ENCODE measurements at regions of chr17 and their contacts with region 1.

Region 1: DNA sequence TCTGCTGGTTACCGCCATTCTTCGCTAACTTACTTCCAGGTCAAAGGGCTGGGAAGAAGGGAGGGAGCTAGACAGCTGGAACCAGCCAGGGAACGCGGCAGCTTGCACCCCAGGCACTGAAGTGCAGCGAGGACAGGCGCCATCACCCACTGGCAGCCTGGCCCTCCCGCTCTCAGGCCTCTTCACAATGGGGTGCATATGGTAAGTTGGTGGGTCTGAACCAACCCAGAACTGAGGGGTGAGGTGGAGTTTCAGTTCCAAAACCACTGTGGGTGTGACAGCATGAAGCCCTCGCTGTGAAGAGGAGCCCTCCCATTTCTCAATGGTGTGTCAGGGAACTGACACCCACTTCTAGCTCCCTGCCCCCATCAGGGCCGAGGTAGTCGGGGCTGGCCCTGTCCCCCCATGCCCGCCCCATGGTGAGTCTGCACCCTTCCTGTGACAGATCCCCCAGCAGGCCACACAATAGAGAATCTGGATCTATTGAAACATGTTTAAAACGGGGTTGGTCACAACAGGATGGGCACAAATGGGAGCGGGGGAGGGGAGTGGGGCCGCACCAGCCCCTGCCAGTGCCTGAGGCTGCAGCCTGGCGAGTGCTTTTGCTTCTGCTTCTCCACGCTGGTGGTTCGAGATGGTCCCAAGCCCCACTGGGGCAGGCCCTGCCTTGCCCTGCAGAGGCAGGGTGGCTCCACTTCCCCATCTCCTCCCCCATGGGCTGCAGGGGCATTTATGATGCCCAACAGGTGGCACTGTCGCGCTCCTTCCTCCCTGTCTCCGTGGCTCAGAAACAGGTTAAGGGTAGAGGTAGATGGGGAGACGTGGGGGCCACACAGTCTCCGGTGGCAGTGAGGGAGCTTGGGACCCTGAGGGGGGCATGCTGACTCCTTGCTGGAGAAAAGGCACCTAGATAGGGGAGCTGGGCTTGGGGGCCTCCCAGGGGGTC is 2.3 kb downstream of the LIMD2 start:
- DNase-seq: peak; percentile 74 to 91 (median 86)
- ATAC-seq: peak; percentile 57
- H3K4me3 ChIP-seq: peak overlapping the region; percentile 81
- H3K4me3 Mint-ChIP-seq: peak overlapping the region; percentile 83 to 100 (median 98)
- H3K27ac ChIP-seq: peak overlapping the region; percentile 93
- H3K27ac Mint-ChIP-seq: peak overlapping the region; percentile 89 to 100 (median 99)
- H3K4me1 ChIP-seq: peaks cover 43 to 46% of the 10 kb centered on the region in 2 donors
- H3K4me1 Mint-ChIP-seq: peaks cover 45 to 61% (median 56%) of the 10 kb centered on the region in 7 donors
- H3K27me3 ChIP-seq: no peaks in the 10 kb centered on the region
- H3K27me3 Mint-ChIP-seq: no peaks in the 10 kb centered on the region

Region 2: GRCh38 chr17:63549946-63550807 is 147.4 kb before region 1 on chr17 and contains the start of gene DCAF7:
- CTCF ChIA-PET with region 1: no interaction called
- POLR2A ChIA-PET with region 1: interaction called, 5 read pairs
- intact Hi-C with region 1: loop called (anchors 2 to 5 kb)
- DNase-seq: peak; percentile 93 to 99 (median 99)
- ATAC-seq: peak; percentile 97
- H3K4me3 ChIP-seq: peak within 1 kb of the TSS; percentile 93
- H3K4me3 Mint-ChIP-seq: peak within 1 kb of the TSS; percentile 85 to 99 (median 98)
- H3K27ac ChIP-seq: peak within 1 kb of the TSS; percentile 90
- H3K27ac Mint-ChIP-seq: peak within 1 kb of the TSS; percentile 94 to 97 (median 96)
- H3K4me1 ChIP-seq: peaks cover 18 to 27% of the 10 kb centered on the region in 2 donors
- H3K4me1 Mint-ChIP-seq: peaks cover 32 to 50% (median 41%) of the 10 kb centered on the region in 7 donors
- H3K27me3 ChIP-seq: no peaks in the 10 kb centered on the region
- H3K27me3 Mint-ChIP-seq: peaks cover 0 to 2% (median 0%) of the 10 kb centered on the region in 5 donors
- total RNA-seq, gene DCAF7: 26.0 to 128 (median 70.0) TPM

Region 3: DNA sequence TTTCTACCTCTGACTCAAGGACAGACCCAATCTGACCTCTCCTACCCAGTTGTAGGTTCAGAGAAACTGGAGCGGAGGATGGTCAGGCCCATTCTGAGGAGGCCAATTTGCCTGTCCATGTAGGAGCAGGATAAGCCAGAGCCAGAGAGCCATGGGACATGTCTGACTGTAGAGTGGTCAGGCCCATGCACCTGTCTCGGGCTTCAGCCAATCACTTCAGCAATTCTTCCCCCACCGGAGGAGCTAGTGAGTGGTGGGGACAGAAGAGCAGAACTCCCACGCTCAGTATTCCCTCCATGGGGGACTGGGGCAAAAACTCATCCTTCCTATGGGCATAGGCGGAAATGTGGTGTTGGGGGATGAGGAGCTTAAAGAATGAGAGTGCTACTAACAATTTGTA is 133.1 kb before region 1 on chr17:
- CTCF ChIA-PET with region 1: no interaction called
- POLR2A ChIA-PET with region 1: no interaction called
- intact Hi-C with region 1: no loop called
- DNase-seq: no peak
- ATAC-seq: no peak
- H3K4me3 ChIP-seq: no peak overlapping the region
- H3K4me3 Mint-ChIP-seq: no peak overlapping the region
- H3K27ac ChIP-seq: no peak overlapping the region
- H3K27ac Mint-ChIP-seq: peak overlapping the region in 2 of 9 donors; percentile 38 to 69
- H3K4me1 ChIP-seq: peaks cover 0 to 4% of the 10 kb centered on the region in 2 donors
- H3K4me1 Mint-ChIP-seq: peaks cover 37 to 83% (median 72%) of the 10 kb centered on the region in 7 donors
- H3K27me3 ChIP-seq: no peaks in the 10 kb centered on the region
- H3K27me3 Mint-ChIP-seq: no peaks in the 10 kb centered on the region

Region 4: DNA sequence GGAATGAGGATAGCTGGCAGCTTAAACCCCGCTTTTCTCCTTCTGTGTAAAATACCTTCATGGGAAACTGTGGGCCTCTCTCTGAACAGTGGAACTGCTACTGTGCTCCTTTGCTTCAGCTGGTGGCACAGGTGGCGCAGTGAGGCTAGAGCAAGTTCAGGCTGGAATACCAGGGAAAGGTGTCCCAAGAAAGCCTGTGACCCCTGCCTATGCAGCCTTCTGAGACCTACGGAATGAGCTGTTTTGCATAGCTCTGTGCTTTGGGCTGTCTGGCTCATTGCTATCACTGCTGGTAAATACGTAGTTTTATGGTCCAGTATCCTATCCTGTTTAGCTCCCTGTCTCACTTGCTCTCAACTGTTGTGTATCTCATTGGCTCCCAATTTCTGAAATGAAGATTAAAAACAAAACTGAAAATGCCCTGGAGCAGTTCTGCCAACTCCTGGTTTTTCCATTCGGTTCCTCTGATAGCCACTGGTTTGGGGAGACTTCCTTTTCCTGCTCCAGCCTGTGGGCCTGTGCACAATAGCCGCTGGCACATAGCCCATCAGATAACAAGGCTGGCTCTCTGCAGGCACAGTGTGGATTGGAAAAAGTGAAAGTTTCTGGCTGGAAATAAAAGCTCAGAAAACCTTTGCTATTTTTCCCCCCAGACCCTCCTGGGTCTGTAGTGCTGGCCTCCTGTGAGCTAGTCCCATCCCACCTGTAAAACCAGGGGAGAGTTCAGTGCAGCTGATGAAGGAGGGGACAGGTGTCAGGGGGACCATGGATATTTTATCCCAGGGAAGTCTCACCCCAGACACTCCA is 21.8 kb before region 1 on chr17:
- CTCF ChIA-PET with region 1: no interaction called
- POLR2A ChIA-PET with region 1: interaction called, 60 read pairs
- intact Hi-C with region 1: no loop called
- DNase-seq: no peak
- ATAC-seq: no peak
- H3K4me3 ChIP-seq: no peak overlapping the region
- H3K4me3 Mint-ChIP-seq: no peak overlapping the region
- H3K27ac ChIP-seq: peak overlapping the region; percentile 1
- H3K27ac Mint-ChIP-seq: peak overlapping the region in 7 of 9 donors; percentile 26 to 87 (median 56)
- H3K4me1 ChIP-seq: no peaks in the 10 kb centered on the region
- H3K4me1 Mint-ChIP-seq: peaks cover 3 to 42% (median 30%) of the 10 kb centered on the region in 7 donors
- H3K27me3 ChIP-seq: no peaks in the 10 kb centered on the region
- H3K27me3 Mint-ChIP-seq: no peaks in the 10 kb centered on the region

Region 5: DNA sequence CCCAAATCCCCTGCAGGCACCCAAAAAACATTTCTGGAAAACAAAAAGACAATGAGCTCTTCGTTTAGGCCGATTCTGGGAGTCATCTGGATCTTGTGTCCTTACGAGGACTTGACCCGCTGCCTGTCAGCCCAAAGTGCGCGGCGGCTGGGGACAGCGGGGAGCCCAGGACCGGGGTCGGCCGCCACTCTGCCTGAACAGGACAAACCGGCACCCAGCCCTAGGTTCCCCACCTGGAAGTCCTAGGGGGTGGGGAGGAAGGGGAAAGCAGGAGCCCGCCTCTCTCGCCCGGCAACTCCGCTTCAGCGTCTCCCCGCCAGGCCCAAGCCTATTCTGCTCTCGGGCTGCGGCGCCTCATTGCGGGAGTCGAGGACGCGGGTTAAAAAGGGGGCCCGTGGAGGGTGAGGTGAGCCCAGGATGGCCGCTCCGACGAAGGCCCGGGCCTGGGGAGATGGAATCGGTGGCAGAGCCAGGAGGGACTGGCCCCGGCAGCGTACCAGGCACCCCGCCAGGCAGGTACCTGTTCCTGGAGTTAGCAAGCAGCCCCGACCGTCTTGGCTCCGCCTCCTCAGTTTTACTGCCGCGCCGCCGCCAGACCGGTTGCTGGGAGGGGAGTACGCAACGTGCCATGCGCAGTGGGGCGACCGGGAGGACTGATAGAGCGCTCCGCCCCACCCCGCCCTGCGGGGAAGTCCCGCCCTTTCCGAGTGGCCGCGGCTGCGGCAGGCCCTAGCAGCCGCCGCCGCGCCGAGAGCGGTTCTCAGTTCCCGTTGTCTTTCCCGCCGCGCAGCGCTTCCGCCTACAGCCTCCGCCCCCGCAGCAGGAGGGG is 43.8 kb after region 1 on chr17 and contains the start of gene STRADA:
- CTCF ChIA-PET with region 1: interaction called, 4 read pairs
- POLR2A ChIA-PET with region 1: interaction called, 82 read pairs
- intact Hi-C with region 1: loop called (anchors 1 kb)
- DNase-seq: peak; percentile 95 to 99 (median 98)
- ATAC-seq: peak; percentile 97
- H3K4me3 ChIP-seq: peak within 1 kb of the TSS; percentile 74
- H3K4me3 Mint-ChIP-seq: peak within 1 kb of the TSS; percentile 83 to 98 (median 89)
- H3K27ac ChIP-seq: peak within 1 kb of the TSS; percentile 96
- H3K27ac Mint-ChIP-seq: peak within 1 kb of the TSS; percentile 88 to 99 (median 93)
- H3K4me1 ChIP-seq: peaks cover 0 to 8% of the 10 kb centered on the region in 2 donors
- H3K4me1 Mint-ChIP-seq: peaks cover 6 to 36% (median 24%) of the 10 kb centered on the region in 7 donors
- H3K27me3 ChIP-seq: no peaks in the 10 kb centered on the region
- H3K27me3 Mint-ChIP-seq: no peaks in the 10 kb centered on the region
- total RNA-seq, gene STRADA: 51.0 to 69.7 (median 54.2) TPM

Region 6: GRCh38 chr17:63773381-63774140 is 75.9 kb after region 1 on chr17 and contains the start of gene CCDC47:
- CTCF ChIA-PET with region 1: interaction called, 9 read pairs
- POLR2A ChIA-PET with region 1: interaction called, 117 read pairs
- intact Hi-C with region 1: loop called (anchors 1 kb)
- DNase-seq: peak; percentile 92 to 99 (median 99)
- ATAC-seq: peak; percentile 88
- H3K4me3 ChIP-seq: peak within 1 kb of the TSS; percentile 85
- H3K4me3 Mint-ChIP-seq: peak within 1 kb of the TSS; percentile 91 to 99 (median 98)
- H3K27ac ChIP-seq: peak within 1 kb of the TSS; percentile 100
- H3K27ac Mint-ChIP-seq: peak within 1 kb of the TSS; percentile 97 to 100 (median 99)
- H3K4me1 ChIP-seq: peaks cover 21 to 46% of the 10 kb centered on the region in 2 donors
- H3K4me1 Mint-ChIP-seq: peaks cover 31 to 84% (median 62%) of the 10 kb centered on the region in 7 donors
- H3K27me3 ChIP-seq: no peaks in the 10 kb centered on the region
- H3K27me3 Mint-ChIP-seq: peaks cover 0 to 7% (median 0%) of the 10 kb centered on the region in 5 donors
- total RNA-seq, gene CCDC47: 31.8 to 62.9 (median 34.7) TPM

Region 7: DNA sequence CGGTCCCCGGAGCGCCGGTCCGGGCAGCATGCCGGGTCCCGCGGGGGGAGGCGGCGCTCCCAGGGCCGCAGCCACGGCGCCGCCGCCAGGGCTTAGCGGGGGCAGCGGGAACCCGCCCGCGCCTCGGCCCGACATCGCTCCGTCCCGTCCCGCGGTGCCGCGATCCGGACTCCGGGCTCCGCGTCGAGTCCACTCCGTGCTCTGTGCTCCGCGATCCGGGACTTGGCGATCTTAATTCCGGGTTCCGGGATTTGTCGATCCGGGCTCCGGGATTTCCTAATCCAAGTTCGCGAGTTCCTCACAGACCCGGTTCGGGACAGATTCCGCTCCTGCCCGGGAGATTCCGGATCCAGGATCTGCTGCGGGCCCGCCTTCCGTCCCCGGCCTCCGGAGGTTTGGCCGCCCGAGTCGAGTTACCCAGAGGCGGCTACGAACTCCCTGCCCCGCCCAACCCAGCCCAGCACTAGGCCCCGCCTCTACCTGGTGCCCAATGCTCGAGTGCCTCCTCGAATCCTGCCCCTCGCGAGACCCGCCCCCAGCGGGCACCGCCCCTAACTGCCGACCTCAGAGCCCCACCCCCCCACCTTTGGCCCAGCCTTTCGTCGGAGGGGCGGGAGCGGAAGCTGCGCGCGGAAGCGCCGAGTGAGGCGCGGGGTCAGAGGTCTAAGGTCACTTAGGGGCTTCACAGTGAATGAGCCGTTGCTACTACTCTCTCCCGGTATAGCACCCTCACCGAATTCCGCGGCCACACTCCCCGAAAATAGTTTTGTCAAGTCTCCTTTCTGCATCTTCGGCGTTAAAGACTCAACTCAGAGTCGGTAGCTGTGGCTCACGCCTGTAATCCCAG is 145.1 kb after region 1 on chr17 and contains the start of gene SMARCD2:
- CTCF ChIA-PET with region 1: interaction called, 3 read pairs
- POLR2A ChIA-PET with region 1: interaction called, 58 read pairs
- intact Hi-C with region 1: loop called (anchors 1 kb)
- DNase-seq: peak; percentile 94 to 99 (median 98)
- ATAC-seq: peak; percentile 96
- H3K4me3 ChIP-seq: peak within 1 kb of the TSS; percentile 87
- H3K4me3 Mint-ChIP-seq: peak within 1 kb of the TSS; percentile 92 to 98 (median 95)
- H3K27ac ChIP-seq: peak within 1 kb of the TSS; percentile 96
- H3K27ac Mint-ChIP-seq: peak within 1 kb of the TSS; percentile 87 to 95 (median 92)
- H3K4me1 ChIP-seq: peaks cover 34 to 36% of the 10 kb centered on the region in 2 donors
- H3K4me1 Mint-ChIP-seq: peaks cover 27 to 52% (median 44%) of the 10 kb centered on the region in 7 donors
- H3K27me3 ChIP-seq: no peaks in the 10 kb centered on the region
- H3K27me3 Mint-ChIP-seq: no peaks in the 10 kb centered on the region
- total RNA-seq, gene SMARCD2: 102 to 148 (median 109) TPM